Right ventricle myocardium inferior (tissue), 1 donor: ENCODE measurements at regions of chr10 and their contacts with region 1.

Region 1: DNA sequence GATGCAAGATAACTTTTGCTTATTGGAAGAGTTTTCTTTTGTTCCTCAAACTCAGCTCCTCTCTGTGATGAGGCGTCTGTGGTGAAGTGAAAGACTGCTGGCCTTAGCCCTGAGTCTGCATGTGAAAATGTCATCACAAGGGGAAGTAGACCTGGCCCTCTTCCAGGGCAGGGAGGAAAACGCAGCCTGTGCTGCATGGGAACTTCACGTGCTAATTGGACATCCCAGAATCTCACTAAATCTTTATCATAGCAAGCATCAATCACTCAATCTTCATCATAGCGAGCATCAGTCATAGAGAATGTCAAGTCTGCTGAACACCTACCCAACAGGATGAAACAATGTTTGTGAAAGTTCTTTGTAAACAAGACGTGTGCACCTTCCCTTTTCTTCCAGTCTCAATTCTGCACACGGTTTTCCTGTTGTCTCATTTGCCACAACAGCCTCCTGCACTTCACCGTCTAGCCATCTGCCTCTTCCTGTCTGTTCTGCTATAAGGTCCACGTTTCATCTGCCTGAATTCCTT is 314.6 kb downstream of the FRMD4A start:
- DNase-seq: no peak
- ATAC-seq: peak; percentile 78

Region 2: GRCh38 chr10:14048930-14049613 is 33.0 kb after region 1 on chr10:
- intact Hi-C with region 1: no loop called
- DNase-seq: no peak
- ATAC-seq: no peak

Region 3: DNA sequence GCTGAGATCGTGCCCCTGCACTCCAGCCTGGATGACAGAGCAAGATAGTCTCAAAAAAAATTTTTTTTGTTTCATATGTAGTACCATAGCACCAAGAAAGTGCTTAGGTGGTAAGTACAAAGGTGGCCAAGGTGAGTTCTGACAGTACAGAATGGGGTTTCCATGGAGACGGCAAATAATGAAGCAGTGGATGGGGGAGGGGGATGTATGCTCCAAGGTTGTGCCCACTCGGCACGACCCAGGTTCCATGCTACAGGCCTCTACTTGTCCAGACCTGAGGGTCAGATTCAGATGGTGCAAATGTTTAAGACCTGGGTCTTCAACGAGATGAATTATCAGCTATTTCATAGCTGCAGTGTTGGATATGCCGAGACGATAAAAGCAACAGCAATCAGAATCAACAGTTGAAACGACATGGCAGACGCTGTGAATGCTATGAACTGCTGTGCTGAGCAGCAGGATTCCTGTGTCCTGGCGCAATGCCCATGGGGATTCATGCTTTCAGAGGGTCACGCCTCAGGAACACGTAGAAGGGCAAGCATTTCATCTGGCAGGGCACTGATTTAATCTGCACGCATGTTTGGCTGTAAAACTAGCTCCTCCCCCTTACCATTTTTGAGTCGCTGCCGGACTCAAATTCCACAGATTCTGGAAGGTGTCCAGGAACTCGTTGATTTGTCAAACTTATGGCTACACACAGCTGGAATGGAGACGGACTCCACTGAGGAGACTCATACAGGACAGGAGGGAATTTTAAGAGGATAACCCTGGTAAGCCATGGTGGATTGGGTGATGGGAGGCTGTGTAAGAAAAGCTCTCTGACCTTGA is 58.2 kb after region 1 on chr10:
- intact Hi-C with region 1: loop called (anchors 5 kb)
- DNase-seq: peak; percentile 88
- ATAC-seq: peak; percentile 95